ENCODE measurements at regions of chr15 and their contacts with region 1.

Region 1: DNA sequence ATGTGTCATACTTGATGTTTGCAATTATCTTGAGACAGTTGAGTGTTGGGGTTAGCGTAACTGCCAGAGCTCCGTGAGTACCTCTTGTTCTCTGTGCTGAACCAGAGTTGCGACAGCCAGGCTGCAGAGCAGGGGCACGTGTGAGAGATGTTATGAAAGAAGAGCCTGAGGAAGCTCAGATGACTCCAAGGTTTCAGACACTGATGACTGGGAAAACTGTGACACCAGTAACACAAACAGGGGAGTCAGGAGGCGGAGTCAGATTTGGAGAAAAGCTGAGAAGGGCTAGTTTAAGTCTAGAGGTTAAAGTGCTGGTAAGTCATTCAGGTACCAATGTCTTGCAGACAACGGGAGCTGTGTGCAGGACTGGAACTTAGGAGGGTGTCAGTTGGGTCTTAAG is 45.0 kb downstream of the BLM start:
- DNase-seq: peak in 4 of 10 donors; percentile 7 to 51 (median 36)

Region 2: DNA sequence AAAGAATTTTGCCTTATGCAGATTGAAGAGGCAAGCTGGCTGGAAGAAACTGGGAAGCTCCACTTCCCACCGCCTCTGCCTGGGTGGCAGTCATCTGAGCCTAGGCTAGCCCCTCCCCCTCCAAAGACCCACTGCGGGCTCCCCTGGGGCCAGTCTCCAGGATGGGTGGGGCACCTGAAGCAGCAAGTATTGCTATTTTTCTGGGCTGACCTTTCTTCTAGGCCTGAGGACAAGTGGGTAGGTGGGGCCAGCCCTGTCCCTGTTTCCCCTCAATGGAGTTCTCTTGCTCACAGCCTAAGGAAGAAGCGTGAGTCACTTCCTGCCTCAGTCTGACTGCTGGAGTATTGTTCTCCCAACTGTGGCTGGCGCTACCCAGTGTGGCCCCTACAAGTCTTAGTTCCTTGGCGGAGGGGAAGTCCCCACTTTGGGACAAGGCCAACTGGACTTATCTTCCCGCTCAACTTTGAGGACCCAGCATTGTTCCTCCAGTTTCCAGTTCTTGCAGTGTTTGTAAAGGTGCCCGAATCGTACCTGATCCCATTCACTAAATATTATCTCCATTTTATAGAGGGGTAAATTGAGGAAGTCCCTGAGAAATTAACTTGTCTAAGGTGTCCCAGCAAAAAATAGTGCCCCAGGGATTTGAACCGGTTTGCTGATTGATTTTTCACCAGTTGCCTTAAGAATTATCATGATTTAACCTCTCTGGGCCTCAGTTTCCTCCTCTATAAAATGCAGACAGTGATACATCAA is 107.7 kb after region 1 on chr15:
- intact Hi-C with region 1: loop called (anchors 5 kb)
- DNase-seq: peak in 1 of 10 donors; percentile 84

Region 3: GRCh38 chr15:91336687-91337086 is 574.6 kb after region 1 on chr15:
- intact Hi-C with region 1: no loop called
- DNase-seq: no peak

Measured in posterior cingulate gyrus (tissue), 11 donors.